GM13977 (cell line): ENCODE measurements at regions of chr5 and their contacts with region 1.

Region 1: DNA sequence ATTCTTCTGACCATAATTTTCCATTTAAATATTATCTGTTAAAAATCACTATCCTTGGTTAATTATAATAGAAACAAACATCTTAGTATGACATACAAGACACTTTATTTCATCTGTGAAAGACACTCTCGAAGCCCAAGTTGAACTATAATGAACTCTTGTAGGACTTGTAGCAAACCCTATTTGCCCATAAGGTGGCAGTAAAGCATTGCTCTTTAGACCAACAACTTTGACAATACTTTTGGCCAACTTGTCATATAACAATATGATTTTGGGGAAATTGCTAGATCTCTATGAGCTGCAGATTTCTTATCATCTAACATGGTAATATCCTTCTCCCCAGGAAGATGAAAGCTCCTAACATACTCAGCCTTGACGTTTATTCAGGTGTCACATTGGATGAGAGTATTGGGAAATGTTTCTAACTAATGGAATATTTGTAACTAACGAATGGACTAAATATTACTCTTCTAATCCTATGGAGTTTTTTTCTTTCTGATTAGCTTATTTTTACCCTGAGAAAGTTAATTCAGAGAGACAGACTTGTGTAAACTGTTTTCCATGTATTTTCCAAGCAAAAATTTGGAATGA is 11.0 kb downstream of the SPINK14 start:
- DNase-seq: no peak
- CTCF ChIP-seq: peak; percentile 64

Region 2: DNA sequence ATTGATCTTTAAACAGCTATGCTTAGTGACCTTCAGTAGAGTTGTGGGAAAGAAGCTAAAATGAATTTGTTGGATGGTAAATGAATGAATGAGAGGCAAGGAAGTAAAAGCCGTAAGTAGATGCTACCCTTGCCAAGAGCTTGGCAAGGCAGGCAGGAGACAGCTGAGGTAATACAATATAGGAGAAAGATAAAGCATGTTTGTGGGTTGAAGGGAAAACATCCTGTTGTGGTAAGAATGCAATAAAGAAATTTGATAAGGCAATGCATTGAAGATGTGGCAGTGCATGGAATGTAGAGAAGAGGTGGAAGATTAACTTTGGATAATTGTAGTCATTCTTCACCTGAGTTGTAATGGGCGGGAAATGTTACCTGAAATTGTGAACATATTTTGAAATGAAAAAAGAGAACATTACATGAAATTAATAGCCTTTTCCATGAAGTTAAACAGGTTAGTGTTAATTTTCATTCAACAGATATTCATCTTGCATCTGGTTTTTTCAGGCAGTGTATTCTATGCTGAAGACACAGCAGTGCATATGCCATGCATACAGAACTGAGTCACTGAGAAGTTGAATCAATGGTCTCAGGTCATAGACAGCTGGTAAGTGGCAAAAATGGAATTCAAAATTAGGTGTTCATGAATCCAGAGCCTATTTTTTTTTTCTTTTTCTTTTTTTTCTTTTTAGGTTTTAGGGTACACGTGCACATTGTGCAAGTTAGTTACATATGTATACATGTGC is 158.9 kb before region 1 on chr5:
- in situ Hi-C with region 1: no loop called
- DNase-seq: no peak
- CTCF ChIP-seq: no peak

Region 3: GRCh38 chr5:148666353-148666752 is 487.0 kb after region 1 on chr5:
- in situ Hi-C with region 1: no loop called
- DNase-seq: no peak
- CTCF ChIP-seq: no peak

Region 4: GRCh38 chr5:148708854-148709253 is 529.5 kb after region 1 on chr5:
- in situ Hi-C with region 1: loop called (anchors 25 kb)
- DNase-seq: no peak
- CTCF ChIP-seq: no peak